Endothelial cell of umbilical vein (primary cell): ENCODE measurements at regions of chr6 and their contacts with region 1.

Region 1: GRCh38 chr6:83708970-83709747 is at the start of gene SNAP91:
- DNase-seq: peak; percentile 51
- H3K4me3 ChIP-seq: peak within 1 kb of the TSS; percentile 48 to 68 (median 54)
- H3K27ac ChIP-seq: no peak within 1 kb of the TSS
- H3K4me1 ChIP-seq: peaks cover 14% of the 10 kb centered on the region
- H3K27me3 ChIP-seq: peaks cover 9 to 34% of the 10 kb centered on the region in 2 experiments
- CTCF ChIP-seq: no peak
- POLR2A ChIP-seq: no peak
- total RNA-seq, gene SNAP91: 0.72 and 1.5 TPM in 2 replicates

Region 2: DNA sequence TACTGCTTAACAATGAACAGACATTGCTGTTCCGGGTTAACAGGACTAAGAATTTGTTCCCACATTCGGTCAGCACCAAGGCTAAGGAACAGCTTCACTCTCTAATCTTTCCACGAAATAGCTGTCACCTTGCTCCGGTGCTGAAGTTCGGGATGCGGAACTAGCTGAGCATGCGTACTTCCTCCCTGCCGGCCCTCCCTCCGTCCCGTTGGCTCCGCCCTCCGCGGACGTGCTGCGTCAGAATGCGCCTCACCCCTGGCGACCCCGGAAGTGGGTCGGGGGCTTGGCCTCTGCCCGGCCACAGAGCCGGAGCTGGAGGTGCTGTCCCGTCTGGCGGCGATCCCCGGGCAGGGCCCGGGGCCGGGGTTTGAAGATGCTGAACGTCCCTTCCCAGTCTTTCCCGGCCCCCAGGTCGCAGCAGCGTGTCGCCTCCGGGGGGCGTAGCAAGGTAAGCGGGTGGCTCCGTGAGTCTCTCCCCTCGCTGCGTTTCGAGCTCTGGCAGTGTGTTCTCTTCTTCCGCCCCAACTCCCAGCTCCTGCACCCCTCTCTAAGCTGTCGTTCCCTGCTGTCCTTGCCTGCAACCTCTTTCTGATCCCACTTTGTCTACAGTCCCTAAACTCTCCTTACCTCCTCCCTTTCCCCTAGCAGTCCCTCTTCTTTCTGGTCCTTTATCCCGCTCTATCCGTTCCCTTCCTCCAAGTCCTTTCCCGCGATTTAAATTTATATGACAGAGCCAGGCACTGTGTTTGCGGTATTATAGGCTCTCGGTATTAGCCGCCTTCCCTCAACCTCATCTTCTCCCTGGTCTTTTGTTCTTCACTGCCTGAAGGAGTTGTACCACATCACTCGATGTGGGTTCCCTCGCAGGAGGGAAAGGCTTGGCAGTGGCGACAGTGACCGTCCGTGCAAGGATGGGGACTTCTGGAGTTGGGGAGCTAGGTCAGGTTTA is 150.5 kb after region 1 on chr6 and contains the start of gene CYB5R4:
- CTCF ChIA-PET with region 1: interaction called, 5 read pairs
- POLR2A ChIA-PET with region 1: no interaction called
- dilution Hi-C with region 1: no loop called
- intact Hi-C with region 1: loop called (anchors 5 kb)
- DNase-seq: peak; percentile 94
- H3K4me3 ChIP-seq: peak within 1 kb of the TSS; percentile 29 to 85 (median 79)
- H3K27ac ChIP-seq: peak within 1 kb of the TSS; percentile 36
- H3K4me1 ChIP-seq: peaks cover 8% of the 10 kb centered on the region
- H3K27me3 ChIP-seq: peaks cover 3 to 13% of the 10 kb centered on the region in 2 experiments
- CTCF ChIP-seq: peak; percentile 46 to 76
- POLR2A ChIP-seq: peak; percentile 75
- total RNA-seq, gene CYB5R4: 13.4 TPM in 2 replicates

Region 3: GRCh38 chr6:83872386-83873118 is 163.4 kb after region 1 on chr6:
- CTCF ChIA-PET with region 1: no interaction called
- POLR2A ChIA-PET with region 1: no interaction called
- dilution Hi-C with region 1: no loop called
- intact Hi-C with region 1: loop called (anchors 5 kb)
- DNase-seq: no peak
- H3K4me3 ChIP-seq: no peak overlapping the region
- H3K27ac ChIP-seq: no peak overlapping the region
- H3K4me1 ChIP-seq: no peaks in the 10 kb centered on the region
- H3K27me3 ChIP-seq: no peaks in the 10 kb centered on the region
- CTCF ChIP-seq: no peak
- POLR2A ChIP-seq: no peak

Region 4: DNA sequence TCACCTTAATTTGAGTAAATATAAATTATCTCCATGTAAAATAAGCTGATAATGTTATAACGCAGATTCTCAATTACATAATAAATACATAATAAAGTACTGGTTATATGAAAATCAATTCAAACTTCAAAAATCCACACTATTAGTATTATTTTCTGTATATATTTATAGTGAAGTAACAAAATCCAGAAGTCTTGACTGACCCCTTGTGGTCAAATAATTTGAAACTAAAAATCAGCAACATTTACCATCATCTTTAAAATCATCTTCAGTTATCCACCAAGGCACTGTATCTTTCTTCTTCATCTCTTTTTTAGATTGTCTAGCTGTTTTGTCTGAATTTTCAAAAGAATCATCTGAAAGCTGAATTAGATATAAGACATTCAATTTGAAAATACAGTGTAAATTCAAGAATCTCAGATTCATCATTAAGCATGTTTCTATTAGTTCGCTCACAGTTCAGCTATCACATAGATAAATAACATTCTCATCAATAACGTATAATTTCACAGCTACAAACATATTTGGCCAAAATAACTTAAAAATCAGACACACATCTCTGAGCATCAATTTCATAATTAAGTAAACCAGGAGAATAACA is 511.8 kb after region 1 on chr6:
- CTCF ChIA-PET with region 1: no interaction called
- POLR2A ChIA-PET with region 1: no interaction called
- dilution Hi-C with region 1: no loop called
- intact Hi-C with region 1: loop called (anchors 2 kb)
- DNase-seq: peak; percentile 55
- H3K4me3 ChIP-seq: no peak overlapping the region
- H3K27ac ChIP-seq: no peak overlapping the region
- H3K4me1 ChIP-seq: no peaks in the 10 kb centered on the region
- H3K27me3 ChIP-seq: no peaks in the 10 kb centered on the region
- CTCF ChIP-seq: peak in 1 of 2 donors; percentile 12
- POLR2A ChIP-seq: no peak